HCT116 (cell line): ENCODE measurements at regions of chr2 and their contacts with region 1.

Region 1: DNA sequence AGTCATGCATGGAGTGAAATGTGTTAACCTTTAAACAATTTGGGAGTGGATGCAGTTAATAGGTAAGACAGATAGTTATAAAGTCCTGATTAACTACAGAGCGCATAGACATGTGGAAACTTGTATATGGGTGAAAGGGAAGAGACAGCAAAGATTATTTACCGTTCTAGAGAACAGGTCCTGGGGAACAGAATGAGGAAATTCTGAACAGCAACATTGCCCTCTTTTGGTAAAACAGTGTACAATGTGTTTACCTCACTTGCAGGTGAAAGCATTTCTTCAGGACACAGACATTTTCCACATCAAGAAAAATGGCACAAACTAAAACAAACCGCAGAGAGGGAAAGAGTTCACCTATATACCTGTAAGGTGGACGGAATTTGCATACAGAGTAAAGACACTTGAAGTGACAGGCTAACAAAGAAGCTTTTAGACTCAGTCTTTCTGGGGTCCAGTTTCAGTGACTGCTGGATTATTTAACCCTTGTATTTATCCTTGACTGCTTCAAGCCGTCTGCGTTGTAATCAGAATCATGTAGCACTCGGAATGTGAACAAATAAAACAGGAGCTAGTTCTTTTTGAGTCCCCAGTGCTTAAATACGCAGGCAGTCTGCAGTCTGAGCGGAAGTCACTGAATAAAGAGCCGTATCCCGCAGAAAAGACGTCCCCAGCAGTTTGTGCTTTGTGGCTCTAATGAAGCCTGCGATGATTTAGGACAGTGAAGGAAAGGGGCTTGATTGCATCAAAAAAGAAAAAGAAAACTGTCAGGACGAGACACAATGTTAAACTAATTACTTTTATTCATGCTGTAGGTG is 364.8 kb upstream of the GALNT5 start:
- DNase-seq: peak; percentile 68
- ATAC-seq: peak; percentile 89
- H3K4me3 ChIP-seq: peak overlapping the region; percentile 49 to 67
- H3K27ac ChIP-seq: peak overlapping the region; percentile 56
- H3K4me1 ChIP-seq: peaks cover 2 to 38% of the 10 kb centered on the region in 2 experiments; a peak in 2 of 4 replicates
- H3K27me3 ChIP-seq: no peaks in the 10 kb centered on the region
- CTCF ChIP-seq: peak; percentile 51 to 63 (median 52); a peak in 5 of 6 replicates
- POLR2A ChIP-seq: no peak
- RAD21 ChIP-seq: peak; percentile 89

Region 2: GRCh38 chr2:156065905-156066304 is 826.8 kb before region 1 on chr2:
- CTCF ChIA-PET with region 1: no interaction called
- POLR2A ChIA-PET with region 1: no interaction called
- RAD21 ChIA-PET with region 1: no interaction called
- intact Hi-C with region 1: loop called (anchors 2 kb)
- DNase-seq: no peak
- ATAC-seq: no peak; the same call in 1 of the 2 replicates
- H3K4me3 ChIP-seq: no peak overlapping the region
- H3K27ac ChIP-seq: no peak overlapping the region
- H3K4me1 ChIP-seq: no peaks in the 10 kb centered on the region
- H3K27me3 ChIP-seq: no peaks in the 10 kb centered on the region
- CTCF ChIP-seq: peak; percentile 41 to 65 (median 56); a peak in 5 of 6 replicates
- POLR2A ChIP-seq: no peak
- RAD21 ChIP-seq: peak; percentile 68

Region 3: GRCh38 chr2:156400706-156401678 is 491.7 kb before region 1 on chr2:
- CTCF ChIA-PET with region 1: no interaction called
- POLR2A ChIA-PET with region 1: no interaction called
- RAD21 ChIA-PET with region 1: no interaction called
- intact Hi-C with region 1: loop called (anchors 2 kb)
- DNase-seq: peak; percentile 75
- ATAC-seq: peak; percentile 76
- H3K4me3 ChIP-seq: peak overlapping the region; percentile 37 to 60
- H3K27ac ChIP-seq: peak overlapping the region; percentile 82; the same call in 1 of the 2 replicates
- H3K4me1 ChIP-seq: peaks cover 12 to 49% of the 10 kb centered on the region in 2 experiments
- H3K27me3 ChIP-seq: no peaks in the 10 kb centered on the region
- CTCF ChIP-seq: no peak
- POLR2A ChIP-seq: no peak
- RAD21 ChIP-seq: peak; percentile 7; the same call in 1 of the 2 replicates

Region 4: GRCh38 chr2:157055660-157056199 is 163.1 kb after region 1 on chr2:
- CTCF ChIA-PET with region 1: interaction called, 3 read pairs
- POLR2A ChIA-PET with region 1: no interaction called
- RAD21 ChIA-PET with region 1: no interaction called
- intact Hi-C with region 1: loop called (anchors 2 kb)
- DNase-seq: peak; percentile 22
- ATAC-seq: no peak
- H3K4me3 ChIP-seq: no peak overlapping the region
- H3K27ac ChIP-seq: peak overlapping the region; percentile 40; the same call in 1 of the 2 replicates
- H3K4me1 ChIP-seq: peaks cover 10 to 28% of the 10 kb centered on the region in 2 experiments
- H3K27me3 ChIP-seq: no peaks in the 10 kb centered on the region
- CTCF ChIP-seq: peak; percentile 46 to 73 (median 46); a peak in 5 of 6 replicates
- POLR2A ChIP-seq: no peak
- RAD21 ChIP-seq: peak; percentile 82

Region 5: DNA sequence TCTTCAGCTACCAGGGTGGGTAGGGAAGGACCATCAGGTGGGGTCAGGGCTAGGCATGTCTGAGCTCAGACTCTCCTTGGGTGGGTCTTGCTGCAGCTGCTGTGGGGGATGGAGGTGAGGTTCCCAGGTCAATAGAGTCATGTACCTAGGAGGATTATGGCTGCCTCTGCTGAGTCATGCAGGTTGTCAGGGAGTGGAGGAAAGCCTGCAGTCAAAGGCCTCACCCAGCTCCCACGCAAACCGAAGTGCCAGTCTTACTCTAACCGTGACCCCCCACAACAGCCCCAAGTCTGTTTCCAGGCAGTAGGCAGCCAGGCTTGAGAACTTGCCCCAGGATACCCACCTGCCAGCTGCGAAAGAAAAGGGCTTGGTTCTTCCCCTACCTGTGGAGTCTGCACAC is 251.2 kb after region 1 on chr2:
- CTCF ChIA-PET with region 1: no interaction called
- POLR2A ChIA-PET with region 1: no interaction called
- RAD21 ChIA-PET with region 1: no interaction called
- intact Hi-C with region 1: no loop called
- DNase-seq: no peak
- ATAC-seq: no peak
- H3K4me3 ChIP-seq: no peak overlapping the region
- H3K27ac ChIP-seq: no peak overlapping the region
- H3K4me1 ChIP-seq: no peaks in the 10 kb centered on the region
- H3K27me3 ChIP-seq: no peaks in the 10 kb centered on the region
- CTCF ChIP-seq: no peak
- POLR2A ChIP-seq: no peak
- RAD21 ChIP-seq: no peak

Region 6: DNA sequence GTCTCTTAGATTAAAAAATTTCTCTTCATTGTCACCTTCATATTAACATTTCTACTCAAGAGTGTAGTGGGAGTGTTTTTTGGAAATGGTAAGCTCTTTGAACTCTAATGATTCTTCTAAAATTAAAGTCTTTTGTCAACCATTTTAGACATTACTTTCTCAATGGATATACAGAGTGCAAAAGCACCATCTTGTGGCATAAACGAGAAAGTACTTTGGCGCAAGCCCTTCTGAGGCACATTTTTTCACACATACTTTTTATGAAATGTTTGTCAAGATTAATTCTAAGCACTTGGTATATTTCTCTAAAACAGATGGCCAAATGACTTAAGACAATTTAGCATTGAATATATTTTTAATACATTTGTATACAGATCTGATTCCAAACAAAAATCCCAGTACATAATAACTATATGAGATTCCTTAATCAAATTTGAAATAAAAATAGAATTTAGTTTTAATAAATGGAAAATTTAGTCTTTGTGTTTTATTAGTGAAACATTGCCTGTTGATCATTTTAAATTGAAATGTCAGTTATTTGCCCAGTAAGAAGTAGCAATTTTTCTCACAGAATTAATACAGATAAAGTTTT is 301.5 kb after region 1 on chr2:
- CTCF ChIA-PET with region 1: interaction called, 3 read pairs
- POLR2A ChIA-PET with region 1: no interaction called
- RAD21 ChIA-PET with region 1: no interaction called
- intact Hi-C with region 1: loop called (anchors 2 kb)
- DNase-seq: peak; percentile 49
- ATAC-seq: peak; percentile 80
- H3K4me3 ChIP-seq: no peak overlapping the region
- H3K27ac ChIP-seq: no peak overlapping the region
- H3K4me1 ChIP-seq: peaks cover 0 to 3% of the 10 kb centered on the region in 2 experiments; a peak in 1 of 4 replicates
- H3K27me3 ChIP-seq: no peaks in the 10 kb centered on the region
- CTCF ChIP-seq: peak; percentile 55 to 75 (median 58); a peak in 4 of 6 replicates
- POLR2A ChIP-seq: no peak
- RAD21 ChIP-seq: peak; percentile 90